Naive thymus-derived CD4-positive, alpha-beta T cell (primary cell): ENCODE measurements at regions of chrX and their contacts with region 1.

Region 1: DNA sequence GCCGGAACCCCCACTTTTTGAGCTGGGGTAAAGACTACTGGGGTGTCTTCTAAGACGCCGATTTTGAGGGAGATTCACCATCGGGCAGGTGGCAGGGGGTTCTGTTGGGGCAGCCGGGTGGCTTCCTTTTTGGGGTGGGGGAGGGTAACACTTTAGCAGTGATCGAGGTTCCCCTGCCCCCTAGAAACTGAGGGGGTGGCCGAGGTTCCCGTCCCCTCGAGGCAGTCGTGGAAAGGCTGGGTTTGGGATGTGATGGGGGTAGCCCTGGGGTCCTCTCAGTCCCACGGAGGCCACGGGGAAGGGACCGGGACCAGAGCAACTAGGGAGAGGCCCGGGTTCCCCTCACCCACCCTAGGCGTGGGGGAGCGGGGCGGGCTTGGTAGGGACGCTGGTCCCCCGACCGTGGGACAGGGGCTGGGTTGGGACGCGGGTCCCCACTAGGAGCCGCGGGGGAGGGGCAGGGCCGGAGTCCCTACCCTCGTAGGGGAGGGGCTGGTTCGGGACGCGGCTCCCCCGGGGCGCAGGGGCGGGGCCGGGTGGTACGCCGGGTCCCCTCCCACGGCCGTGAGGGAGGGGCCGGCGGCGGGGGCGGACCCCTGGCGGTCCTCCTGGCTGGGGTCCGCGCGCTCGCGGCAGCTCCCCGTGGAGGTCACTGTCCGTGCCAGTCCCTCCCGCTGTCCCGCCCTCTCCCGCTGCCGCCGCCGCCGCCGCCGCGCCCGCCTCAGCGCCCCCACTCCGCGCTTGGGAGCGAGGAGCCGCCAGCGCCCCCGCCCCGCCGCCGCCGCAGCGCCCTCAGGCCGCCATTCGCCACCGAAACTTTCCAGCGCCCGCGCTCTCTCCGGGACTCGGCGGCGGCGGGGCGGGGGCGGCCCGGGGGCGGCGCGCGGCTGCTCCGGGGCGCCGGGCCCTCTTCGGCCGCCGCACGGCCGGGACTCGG is at the start of gene TBL1X:
- DNase-seq: peak; percentile 35 to 71 (median 43)
- ATAC-seq: peak; percentile 59
- H3K4me3 ChIP-seq: peak within 1 kb of the TSS; percentile 47
- H3K4me3 Mint-ChIP-seq: peak within 1 kb of the TSS; percentile 78 to 89 (median 86)
- H3K27ac ChIP-seq: peak within 1 kb of the TSS; percentile 86
- H3K27ac Mint-ChIP-seq: peak within 1 kb of the TSS; percentile 80 to 96 (median 89)
- H3K4me1 ChIP-seq: peaks cover 8 to 22% of the 10 kb centered on the region in 2 donors
- H3K4me1 Mint-ChIP-seq: peaks cover 24 to 66% (median 46%) of the 10 kb centered on the region in 7 donors
- H3K27me3 ChIP-seq: no peaks in the 10 kb centered on the region
- H3K27me3 Mint-ChIP-seq: peaks cover 0 to 3% (median 0%) of the 10 kb centered on the region in 5 donors
- total RNA-seq, gene TBL1X: 27.2 to 58.8 (median 29.4) TPM

Region 2: GRCh38 chrX:8971116-8971515 is 493.6 kb before region 1 on chrX:
- CTCF ChIA-PET with region 1: no interaction called
- POLR2A ChIA-PET with region 1: interaction called, 5 read pairs
- intact Hi-C with region 1: loop called in 1 of 2 experiments (anchors 1 kb)
- DNase-seq: peak in 7 of 9 donors; percentile 18 to 59 (median 41)
- ATAC-seq: peak; percentile 49
- H3K4me3 ChIP-seq: no peak overlapping the region
- H3K4me3 Mint-ChIP-seq: no peak overlapping the region
- H3K27ac ChIP-seq: no peak overlapping the region
- H3K27ac Mint-ChIP-seq: peak overlapping the region in 3 of 9 donors; percentile 33 to 72 (median 33)
- H3K4me1 ChIP-seq: no peaks in the 10 kb centered on the region
- H3K4me1 Mint-ChIP-seq: peaks cover 0 to 2% (median 0%) of the 10 kb centered on the region in 7 donors
- H3K27me3 ChIP-seq: no peaks in the 10 kb centered on the region
- H3K27me3 Mint-ChIP-seq: no peaks in the 10 kb centered on the region

Region 3: GRCh38 chrX:9312922-9313867 is 151.5 kb before region 1 on chrX:
- CTCF ChIA-PET with region 1: interaction called, 3 read pairs
- POLR2A ChIA-PET with region 1: no interaction called
- intact Hi-C with region 1: loop called in 1 of 2 experiments (anchors 1 kb)
- DNase-seq: peak; percentile 12 to 69 (median 57)
- ATAC-seq: peak; percentile 83
- H3K4me3 ChIP-seq: no peak overlapping the region
- H3K4me3 Mint-ChIP-seq: peak overlapping the region in 2 of 10 donors; percentile 50 to 56
- H3K27ac ChIP-seq: no peak overlapping the region
- H3K27ac Mint-ChIP-seq: peak overlapping the region in 3 of 9 donors; percentile 26 to 75 (median 66)
- H3K4me1 ChIP-seq: peaks cover 4 to 6% of the 10 kb centered on the region in 2 donors
- H3K4me1 Mint-ChIP-seq: peaks cover 10 to 21% (median 11%) of the 10 kb centered on the region in 7 donors
- H3K27me3 ChIP-seq: no peaks in the 10 kb centered on the region
- H3K27me3 Mint-ChIP-seq: no peaks in the 10 kb centered on the region

Region 4: DNA sequence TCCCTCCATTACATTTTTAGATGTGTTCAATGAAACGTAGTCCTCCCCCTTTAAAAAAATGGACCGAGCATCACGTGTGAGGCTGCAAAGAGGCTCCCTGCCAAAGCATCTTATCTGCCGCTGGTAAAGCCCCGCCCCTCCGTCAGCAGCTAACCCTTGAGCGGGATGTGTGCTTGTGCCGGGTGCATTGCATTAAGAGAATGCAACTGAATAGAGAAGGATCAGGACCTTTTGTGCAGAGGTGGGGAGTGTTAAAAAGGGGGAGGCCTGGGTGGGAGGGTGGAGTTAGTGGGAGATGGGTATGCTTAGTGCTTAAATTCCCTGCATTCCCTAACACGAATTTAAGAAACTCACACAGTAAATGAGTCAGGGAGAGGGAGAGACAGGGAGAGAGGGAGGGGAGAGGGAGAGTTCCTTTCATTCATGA is 66.2 kb after region 1 on chrX:
- CTCF ChIA-PET with region 1: no interaction called
- POLR2A ChIA-PET with region 1: no interaction called
- intact Hi-C with region 1: loop called (anchors 1 to 5 kb)
- DNase-seq: peak; percentile 9 to 62 (median 43)
- ATAC-seq: peak; percentile 90
- H3K4me3 ChIP-seq: no peak overlapping the region
- H3K4me3 Mint-ChIP-seq: peak overlapping the region; percentile 70 to 89 (median 76)
- H3K27ac ChIP-seq: no peak overlapping the region
- H3K27ac Mint-ChIP-seq: peak overlapping the region in 8 of 9 donors; percentile 3 to 86 (median 38)
- H3K4me1 ChIP-seq: peaks cover 6 to 13% of the 10 kb centered on the region in 2 donors
- H3K4me1 Mint-ChIP-seq: peaks cover 20 to 69% (median 66%) of the 10 kb centered on the region in 7 donors
- H3K27me3 ChIP-seq: no peaks in the 10 kb centered on the region
- H3K27me3 Mint-ChIP-seq: no peaks in the 10 kb centered on the region

Region 5: DNA sequence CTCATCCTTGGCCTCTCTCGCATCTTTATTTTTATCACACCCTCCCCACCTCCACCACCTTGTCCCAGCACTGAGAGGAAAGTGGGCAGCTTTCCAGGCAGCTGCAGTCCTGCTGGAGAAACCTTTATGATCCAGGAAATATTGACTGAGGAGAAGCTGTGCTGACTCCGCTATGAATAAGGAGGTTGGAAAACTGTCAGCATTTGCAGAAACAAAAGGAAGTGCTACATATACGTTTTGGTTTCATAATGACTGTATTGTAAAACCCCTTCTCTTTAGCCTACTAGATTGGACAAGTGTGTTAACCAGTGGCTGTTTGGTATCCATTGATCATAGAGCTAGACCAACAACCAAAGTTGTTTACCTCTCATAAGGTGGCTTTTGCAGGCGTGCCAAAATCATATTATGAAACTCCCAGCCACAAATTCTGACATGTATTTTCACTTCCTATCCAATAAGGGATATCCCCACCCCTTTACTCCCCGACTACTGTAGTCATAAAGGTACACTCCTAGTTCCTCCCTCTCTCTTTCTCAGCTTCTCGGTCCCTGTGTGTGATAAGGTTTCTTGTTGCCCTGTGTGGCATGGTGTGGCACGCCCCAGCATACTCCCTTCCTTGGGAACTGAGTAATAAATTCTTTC is 212.5 kb after region 1 on chrX:
- CTCF ChIA-PET with region 1: no interaction called
- POLR2A ChIA-PET with region 1: no interaction called
- intact Hi-C with region 1: loop called in 1 of 2 experiments (anchors 1 kb)
- DNase-seq: peak in 3 of 9 donors; percentile 7 to 23 (median 16)
- ATAC-seq: peak; percentile 88
- H3K4me3 ChIP-seq: no peak overlapping the region
- H3K4me3 Mint-ChIP-seq: peak overlapping the region in 2 of 10 donors; percentile 15 to 63
- H3K27ac ChIP-seq: no peak overlapping the region
- H3K27ac Mint-ChIP-seq: peak overlapping the region in 5 of 9 donors; percentile 25 to 91 (median 64)
- H3K4me1 ChIP-seq: no peaks in the 10 kb centered on the region
- H3K4me1 Mint-ChIP-seq: peaks cover 7 to 40% (median 22%) of the 10 kb centered on the region in 7 donors
- H3K27me3 ChIP-seq: no peaks in the 10 kb centered on the region
- H3K27me3 Mint-ChIP-seq: no peaks in the 10 kb centered on the region

Region 6: GRCh38 chrX:10111364-10112148 is 646.9 kb after region 1 on chrX:
- CTCF ChIA-PET with region 1: no interaction called
- POLR2A ChIA-PET with region 1: no interaction called
- intact Hi-C with region 1: loop called in 1 of 2 experiments (anchors 2 kb)
- DNase-seq: peak; percentile 12 to 81 (median 73)
- ATAC-seq: peak; percentile 84
- H3K4me3 ChIP-seq: peak overlapping the region; percentile 56
- H3K4me3 Mint-ChIP-seq: peak overlapping the region; percentile 65 to 90 (median 85)
- H3K27ac ChIP-seq: peak overlapping the region; percentile 81
- H3K27ac Mint-ChIP-seq: peak overlapping the region; percentile 96 to 100 (median 98)
- H3K4me1 ChIP-seq: peaks cover 61% of the 10 kb centered on the region in 2 donors
- H3K4me1 Mint-ChIP-seq: peaks cover 14 to 64% (median 62%) of the 10 kb centered on the region in 7 donors
- H3K27me3 ChIP-seq: no peaks in the 10 kb centered on the region
- H3K27me3 Mint-ChIP-seq: no peaks in the 10 kb centered on the region